ENCODE measurements at regions of chr10 and their contacts with region 1.

Region 1: DNA sequence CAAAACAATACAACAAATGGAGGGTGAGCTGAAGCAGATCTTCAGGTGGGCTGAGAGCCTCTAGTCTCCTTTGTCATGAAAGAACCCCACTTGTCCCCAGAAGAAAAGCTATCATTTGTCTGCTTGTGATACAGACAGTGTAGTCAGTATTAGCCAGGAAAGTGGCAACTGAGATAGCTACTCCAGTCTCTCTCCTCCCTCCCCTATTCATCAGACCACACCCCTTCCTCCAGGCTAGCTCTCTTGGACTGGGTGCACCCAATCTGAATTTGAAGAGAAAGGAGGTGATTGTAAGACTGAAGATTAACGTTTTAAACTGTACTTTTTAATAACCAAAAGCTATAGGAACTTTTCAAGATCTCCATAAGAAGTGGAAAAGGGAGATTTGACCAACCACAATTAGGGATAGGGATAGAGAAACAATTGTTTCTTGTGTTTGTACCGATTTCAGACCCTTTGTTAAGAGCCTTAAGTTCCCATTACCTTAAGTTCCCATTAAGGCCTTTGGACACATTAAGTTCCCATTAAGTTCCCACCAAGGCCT is 14.1 kb downstream of the BMPR1A start:
- DNase-seq: no peak
- ATAC-seq: peak; percentile 75

Region 2: GRCh38 chr10:86269332-86269731 is 501.2 kb before region 1 on chr10:
- intact Hi-C with region 1: no loop called
- DNase-seq: peak in 1 of 2 donors; percentile 1
- ATAC-seq: no peak

Region 3: GRCh38 chr10:86472061-86472460 is 298.4 kb before region 1 on chr10:
- intact Hi-C with region 1: no loop called
- DNase-seq: no peak
- ATAC-seq: no peak

Region 4: GRCh38 chr10:86876748-86877147 is 106.3 kb after region 1 on chr10:
- intact Hi-C with region 1: loop called in 1 of 2 experiments (anchors 5 kb)
- DNase-seq: no peak
- ATAC-seq: peak; percentile 96

Region 5: GRCh38 chr10:87531908-87532622 is 761.6 kb after region 1 on chr10:
- intact Hi-C with region 1: no loop called
- DNase-seq: no peak
- ATAC-seq: peak; percentile 42

Measured in left colon (tissue), 2 donors.